Dorsolateral prefrontal cortex (tissue), 120 donors: ENCODE measurements at regions of chr2 and their contacts with region 1.

Region 1: GRCh38 chr2:1550658-1551316 is 137.5 kb downstream of the TPO start:
- DNase-seq: peak in 7 of 10 donors; percentile 45 to 75 (median 55)
- H3K4me3 ChIP-seq: peak overlapping the region in 1 of 59 donors; percentile 18
- H3K27ac ChIP-seq: no peak overlapping the region
- H3K27me3 ChIP-seq: peaks cover 0 to 8% (median 0%) of the 10 kb centered on the region in 45 donors
- CTCF ChIP-seq: peak; percentile 74 to 98 (median 93)

Region 2: GRCh38 chr2:715854-716560 is 834.8 kb before region 1 on chr2:
- intact Hi-C with region 1: loop called in 1 of 2 experiments (anchors 5 kb)
- DNase-seq: no peak
- H3K4me3 ChIP-seq: no peak overlapping the region
- H3K27ac ChIP-seq: no peak overlapping the region
- H3K27me3 ChIP-seq: peaks cover 0 to 27% (median 0%) of the 10 kb centered on the region in 45 donors
- CTCF ChIP-seq: peak in 26 of 56 donors; percentile 7 to 45 (median 18)

Region 3: GRCh38 chr2:854460-854859 is 696.3 kb before region 1 on chr2:
- intact Hi-C with region 1: loop called in 1 of 2 experiments (anchors 5 kb)
- DNase-seq: peak in 1 of 10 donors; percentile 30
- H3K4me3 ChIP-seq: no peak overlapping the region
- H3K27ac ChIP-seq: no peak overlapping the region
- H3K27me3 ChIP-seq: no peaks in the 10 kb centered on the region
- CTCF ChIP-seq: peak; percentile 17 to 66 (median 48)

Region 4: DNA sequence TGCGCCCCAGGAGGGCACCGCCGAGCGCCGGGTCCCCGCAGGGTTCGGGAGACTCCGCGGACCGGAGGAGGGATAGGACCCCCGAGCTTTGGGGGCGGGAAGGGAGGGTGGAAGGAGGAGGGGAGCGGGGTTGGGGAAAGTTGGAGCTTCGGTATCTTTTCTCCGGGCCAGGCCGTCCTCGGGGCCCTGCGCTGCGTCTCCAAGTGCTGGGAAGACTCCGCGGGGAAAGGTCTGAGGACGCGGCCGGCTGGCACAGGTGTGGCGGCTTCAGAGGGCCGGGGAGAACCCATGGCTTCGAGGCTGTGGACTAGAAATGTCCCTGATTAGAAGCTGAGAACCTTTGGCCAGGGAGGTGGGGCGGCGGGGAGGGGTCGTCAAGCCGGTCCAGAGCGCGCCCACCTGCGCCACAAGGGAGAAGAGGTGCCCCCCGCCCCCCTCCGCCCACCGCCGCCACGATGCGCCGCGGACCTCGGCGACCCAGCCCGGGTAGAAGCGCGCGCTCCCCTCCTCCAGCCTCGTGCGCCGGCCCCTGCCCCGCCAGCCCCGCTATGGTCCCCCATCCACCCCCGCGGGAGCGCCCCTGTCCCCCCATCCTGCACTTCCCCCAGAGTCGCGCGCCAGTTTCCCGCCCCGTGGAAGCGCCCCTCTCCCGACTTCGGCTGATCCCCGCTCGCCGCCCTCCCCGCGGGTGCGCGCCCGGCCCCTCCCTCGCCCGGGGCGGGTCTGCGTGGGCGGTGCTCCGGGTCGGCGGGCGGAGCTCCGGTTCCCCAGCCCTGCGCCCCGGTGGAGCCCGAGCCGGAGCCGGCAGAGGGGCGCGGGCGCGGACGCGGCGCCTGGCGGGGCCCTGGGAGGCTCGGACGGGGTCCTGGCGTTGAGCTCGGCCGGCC is 600.5 kb before region 1 on chr2 and contains the start of gene SNTG2:
- intact Hi-C with region 1: loop called (anchors 2 to 10 kb)
- DNase-seq: peak in 1 of 10 donors; percentile 63
- H3K4me3 ChIP-seq: peak within 1 kb of the TSS in 57 of 59 donors; percentile 7 to 62 (median 41)
- H3K27ac ChIP-seq: no peak within 1 kb of the TSS
- H3K27me3 ChIP-seq: peaks cover 0 to 83% (median 65%) of the 10 kb centered on the region in 45 donors
- CTCF ChIP-seq: no peak
- total RNA-seq, gene SNTG2: 0.82 to 13.7 (median 3.7) TPM in 119 of 120 experiments, not detected in the other

Region 5: DNA sequence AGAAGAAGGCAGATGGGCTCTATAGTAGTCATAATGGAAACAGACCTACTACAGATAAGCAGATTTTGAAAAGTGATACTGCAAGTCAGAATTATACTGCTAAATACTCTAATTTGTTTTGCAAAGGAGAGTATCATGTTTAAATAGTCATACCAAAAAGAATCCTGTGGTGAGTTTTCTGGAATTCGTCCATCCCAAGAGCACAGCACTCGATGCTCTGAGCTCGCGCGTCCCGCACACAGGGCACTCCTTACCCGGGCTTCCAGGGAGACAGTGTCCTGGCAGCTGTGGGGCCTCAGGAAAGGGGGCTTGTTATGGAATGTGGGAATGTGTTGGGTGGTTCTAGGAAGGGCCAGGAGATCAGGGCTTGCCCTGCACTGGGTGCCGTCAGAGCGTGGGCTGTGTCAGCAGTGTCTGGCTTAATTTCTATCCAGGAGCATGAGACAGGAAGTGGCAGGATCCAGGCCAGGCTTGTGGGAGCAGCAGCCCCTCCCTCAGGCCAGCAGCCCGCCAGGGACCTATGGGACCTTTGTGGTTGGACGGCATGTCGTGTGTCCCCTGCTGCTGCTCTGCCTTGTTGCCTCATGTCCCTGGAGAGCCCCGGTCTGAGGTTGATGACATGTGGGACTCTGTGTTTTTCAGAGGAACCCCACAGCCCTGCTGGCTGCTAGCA is 330.8 kb before region 1 on chr2:
- intact Hi-C with region 1: loop called in 1 of 2 experiments (anchors 10 kb)
- DNase-seq: no peak
- H3K4me3 ChIP-seq: no peak overlapping the region
- H3K27ac ChIP-seq: no peak overlapping the region
- H3K27me3 ChIP-seq: peaks cover 0 to 39% (median 14%) of the 10 kb centered on the region in 45 donors
- CTCF ChIP-seq: no peak

Region 6: GRCh38 chr2:1328684-1329083 is 222.1 kb before region 1 on chr2:
- intact Hi-C with region 1: loop called in 1 of 2 experiments (anchors 2 kb)
- DNase-seq: no peak
- H3K4me3 ChIP-seq: no peak overlapping the region
- H3K27ac ChIP-seq: no peak overlapping the region
- H3K27me3 ChIP-seq: peaks cover 0 to 6% (median 0%) of the 10 kb centered on the region in 45 donors
- CTCF ChIP-seq: no peak

Region 7: DNA sequence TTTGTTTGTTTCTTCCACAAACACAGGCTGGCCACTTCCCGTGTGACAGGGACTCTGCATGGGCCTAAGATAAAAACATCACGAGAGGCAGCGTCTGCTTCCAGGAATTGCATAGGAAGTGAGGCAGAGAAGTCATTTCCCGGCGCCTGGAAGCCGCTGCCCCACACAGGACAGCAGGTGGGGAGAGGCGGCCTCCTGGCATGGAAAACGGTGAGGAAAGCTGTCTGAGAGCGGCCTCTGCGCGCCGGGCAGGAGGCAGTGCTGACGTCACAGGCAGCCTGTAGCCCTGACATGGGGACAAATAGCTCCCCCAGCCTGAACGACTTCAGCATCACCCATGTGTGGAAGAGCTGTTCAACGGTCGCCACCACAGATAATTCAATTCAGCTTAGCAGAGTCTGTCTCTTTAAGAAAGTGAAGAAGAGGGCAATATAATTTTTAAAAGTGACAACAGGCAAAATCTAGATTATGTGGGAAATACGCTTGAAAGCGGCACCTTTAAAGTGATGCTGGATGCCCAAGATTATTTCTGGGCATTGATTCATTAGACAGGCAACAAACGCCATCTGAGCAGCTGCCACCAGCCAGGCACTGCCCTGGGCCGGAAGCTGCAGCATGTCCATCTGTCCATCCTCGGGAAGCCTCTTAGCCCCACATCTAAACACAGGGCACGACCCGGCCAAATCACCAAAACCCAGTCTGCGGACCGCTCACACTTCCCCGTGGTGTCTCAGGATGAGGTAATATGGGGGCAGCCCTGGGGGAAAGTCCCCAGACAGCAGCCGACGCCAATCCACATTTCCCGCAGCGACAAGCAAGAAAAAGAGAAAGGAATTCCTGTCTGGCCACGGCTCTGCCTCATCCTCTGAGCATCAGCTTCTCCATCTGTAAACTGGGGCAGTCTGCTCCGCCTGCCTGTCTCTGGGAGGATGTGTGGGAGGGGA is 54.6 kb after region 1 on chr2:
- intact Hi-C with region 1: no loop called
- DNase-seq: peak in 6 of 10 donors; percentile 16 to 59 (median 45)
- H3K4me3 ChIP-seq: peak overlapping the region in 11 of 59 donors; percentile 12 to 31 (median 18)
- H3K27ac ChIP-seq: peak overlapping the region in 1 of 59 donors; percentile 26
- H3K27me3 ChIP-seq: peaks cover 0 to 32% (median 0%) of the 10 kb centered on the region in 45 donors
- CTCF ChIP-seq: no peak

Region 8: DNA sequence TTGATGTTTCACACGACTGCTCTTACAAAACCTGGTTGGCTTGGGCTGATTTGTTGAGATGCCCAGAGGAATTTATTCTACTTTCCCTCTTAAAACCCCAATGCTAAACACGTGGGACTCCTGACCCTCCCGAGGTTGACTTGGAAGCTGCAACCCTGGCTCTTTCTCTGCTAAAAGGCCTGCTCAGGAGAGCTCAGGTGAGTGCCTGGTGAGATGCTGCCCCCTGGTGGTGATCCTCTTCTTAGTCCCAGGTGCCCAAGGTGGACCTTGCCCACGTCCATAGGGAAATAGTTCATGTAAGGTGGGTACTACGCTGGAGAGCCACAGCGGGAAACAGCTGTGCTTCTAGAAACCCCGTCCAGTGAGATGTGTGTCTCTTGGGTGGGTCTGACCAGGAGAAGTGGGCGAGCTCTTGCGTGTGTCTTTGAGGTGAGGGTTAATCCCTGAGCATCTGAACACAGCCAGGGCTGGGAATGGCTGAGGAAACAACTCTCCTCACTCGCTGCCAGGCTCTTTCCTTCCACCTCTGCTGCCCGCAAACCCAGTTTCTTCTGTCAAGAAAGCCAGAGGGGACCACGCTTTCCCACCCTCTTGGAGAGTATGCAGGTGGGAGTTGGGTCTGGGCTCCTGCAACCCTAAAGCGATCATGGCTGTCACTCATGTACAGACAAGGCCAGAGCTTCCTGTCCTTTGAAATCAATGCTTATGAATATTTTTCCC is 219.1 kb after region 1 on chr2:
- intact Hi-C with region 1: loop called in 1 of 2 experiments (anchors 5 kb)
- DNase-seq: peak in 8 of 10 donors; percentile 45 to 65 (median 54)
- H3K4me3 ChIP-seq: no peak overlapping the region
- H3K27ac ChIP-seq: no peak overlapping the region
- H3K27me3 ChIP-seq: no peaks in the 10 kb centered on the region
- CTCF ChIP-seq: peak; percentile 32 to 78 (median 67)